AG04449 (cell line): ENCODE measurements at regions of chr11 and their contacts with region 1.

Region 1: DNA sequence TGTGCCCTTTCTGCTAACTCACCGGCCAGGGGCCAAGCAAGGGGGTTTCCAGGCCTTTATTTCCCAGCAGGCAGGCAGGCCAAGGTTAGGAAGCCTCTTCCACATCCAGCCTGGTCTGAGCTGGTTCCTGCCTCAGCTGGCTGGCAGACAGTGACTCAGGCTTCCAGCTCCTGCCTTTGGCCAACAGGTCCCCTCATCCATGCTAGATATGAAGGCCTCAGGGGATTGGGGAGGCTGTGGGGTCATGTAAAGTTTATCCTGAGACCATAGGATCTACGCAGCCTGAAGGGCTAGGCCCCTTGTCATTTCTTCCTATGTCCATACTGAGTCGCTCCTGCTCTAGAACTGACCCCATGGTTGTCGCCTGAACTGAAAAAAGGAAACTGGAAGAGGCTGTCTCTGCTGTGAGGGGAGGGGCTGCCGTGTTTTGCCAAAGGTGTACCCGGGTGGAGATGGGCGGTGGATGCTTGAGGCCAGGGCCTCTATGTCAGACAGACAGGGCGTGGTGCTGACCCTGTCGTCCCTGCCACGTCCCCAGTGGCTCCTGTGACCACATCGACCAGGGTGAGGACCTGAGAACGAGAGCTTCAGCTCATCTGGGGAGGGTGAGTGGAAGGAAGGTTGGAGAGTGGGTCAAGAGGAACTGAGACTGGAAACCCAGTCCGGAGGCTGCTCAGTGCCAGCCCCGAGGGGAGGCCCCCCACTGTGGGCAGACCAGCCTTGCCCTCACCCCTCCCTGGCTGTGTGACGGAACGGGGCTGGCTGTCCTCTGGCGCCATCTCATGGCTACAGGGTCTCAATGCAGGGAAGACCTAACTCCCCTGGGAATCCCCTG is 17.0 kb downstream of the P2RY6 start:
- DNase-seq: no peak
- H3K4me3 ChIP-seq: no peak overlapping the region
- CTCF ChIP-seq: peak; percentile 97

Region 2: DNA sequence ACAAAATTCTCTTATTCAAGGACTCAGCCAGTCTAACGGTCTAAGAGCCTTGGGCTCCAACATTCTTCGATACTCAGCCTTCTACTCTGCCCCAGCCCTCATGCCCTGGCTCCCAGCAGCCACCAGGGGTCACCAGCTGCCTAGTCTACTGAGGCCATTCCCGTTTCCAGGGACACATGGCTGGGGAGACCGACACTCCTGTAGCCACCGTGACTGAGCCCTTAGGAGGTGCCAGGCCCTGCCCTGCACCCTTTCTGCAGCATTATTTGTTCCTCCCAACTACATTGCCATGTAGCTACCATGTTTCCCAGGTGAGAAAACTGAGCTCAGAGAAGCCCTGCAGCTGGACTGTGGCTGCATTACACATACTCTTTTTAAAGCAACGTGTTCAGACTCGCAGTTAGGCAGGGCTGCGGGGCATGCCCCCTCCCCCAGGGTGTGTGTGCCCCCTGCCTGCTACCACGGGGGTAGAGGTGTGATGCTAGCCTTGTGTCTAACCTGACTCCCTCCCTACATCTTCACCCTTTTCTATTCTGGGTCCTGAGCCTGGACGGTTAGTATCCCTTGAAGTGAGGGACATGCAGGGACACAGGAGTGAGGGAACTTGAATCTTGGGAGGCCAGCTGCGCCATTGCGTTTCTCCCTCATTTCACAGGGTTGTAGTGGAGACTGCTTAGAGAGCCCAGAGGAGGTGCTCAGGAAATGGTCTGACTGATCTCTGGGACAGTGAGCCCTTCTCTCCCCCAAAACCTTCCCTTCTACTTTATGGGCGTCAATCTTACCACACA is 457.4 kb before region 1 on chr11:
- CTCF ChIA-PET with region 1: interaction called, 26 read pairs
- POLR2A ChIA-PET with region 1: no interaction called
- DNase-seq: no peak
- H3K4me3 ChIP-seq: no peak overlapping the region
- CTCF ChIP-seq: peak; percentile 97

Region 3: DNA sequence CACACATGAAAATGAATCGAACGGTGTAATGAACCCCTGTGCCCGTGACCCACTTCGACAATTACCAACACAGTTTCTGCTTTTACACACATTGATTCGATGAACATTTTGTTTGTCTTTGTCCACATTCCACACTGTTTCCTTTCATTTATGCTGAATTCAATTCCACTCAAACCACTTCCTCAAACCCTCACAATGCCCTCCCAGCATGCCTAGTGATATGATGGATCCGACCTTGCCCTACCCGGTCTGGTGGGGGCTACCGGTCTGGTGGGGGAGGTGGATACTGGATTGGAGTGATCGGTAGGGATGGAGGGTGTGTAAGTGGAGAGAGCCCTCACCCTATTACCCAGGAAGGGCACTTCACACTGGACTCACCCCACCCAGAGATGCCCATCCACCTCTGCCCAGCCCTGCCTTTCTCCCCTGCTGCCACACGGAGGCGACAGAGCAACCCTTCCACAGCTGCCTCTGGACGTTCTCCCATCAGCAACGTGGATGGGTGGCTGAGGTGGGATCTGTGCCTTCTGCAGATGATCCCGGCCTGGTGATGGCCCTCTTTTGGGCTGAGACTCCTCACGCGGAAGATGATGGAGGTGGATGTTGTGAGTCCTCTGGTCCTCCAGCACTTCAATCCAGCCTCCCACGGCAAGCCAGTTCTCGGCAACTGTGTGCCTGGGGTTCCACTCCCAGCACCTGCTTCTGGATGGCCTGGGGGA is 104.0 kb before region 1 on chr11:
- CTCF ChIA-PET with region 1: interaction called, 179 read pairs
- POLR2A ChIA-PET with region 1: no interaction called
- DNase-seq: no peak
- H3K4me3 ChIP-seq: no peak overlapping the region
- CTCF ChIP-seq: peak; percentile 96

Region 4: GRCh38 chr11:73242251-73243079 is 46.6 kb before region 1 on chr11:
- CTCF ChIA-PET with region 1: interaction called, 71 read pairs
- POLR2A ChIA-PET with region 1: no interaction called
- DNase-seq: no peak
- H3K4me3 ChIP-seq: peak overlapping the region; percentile 13; the same call in 1 of the 2 replicates
- CTCF ChIP-seq: peak; percentile 94

Region 5: DNA sequence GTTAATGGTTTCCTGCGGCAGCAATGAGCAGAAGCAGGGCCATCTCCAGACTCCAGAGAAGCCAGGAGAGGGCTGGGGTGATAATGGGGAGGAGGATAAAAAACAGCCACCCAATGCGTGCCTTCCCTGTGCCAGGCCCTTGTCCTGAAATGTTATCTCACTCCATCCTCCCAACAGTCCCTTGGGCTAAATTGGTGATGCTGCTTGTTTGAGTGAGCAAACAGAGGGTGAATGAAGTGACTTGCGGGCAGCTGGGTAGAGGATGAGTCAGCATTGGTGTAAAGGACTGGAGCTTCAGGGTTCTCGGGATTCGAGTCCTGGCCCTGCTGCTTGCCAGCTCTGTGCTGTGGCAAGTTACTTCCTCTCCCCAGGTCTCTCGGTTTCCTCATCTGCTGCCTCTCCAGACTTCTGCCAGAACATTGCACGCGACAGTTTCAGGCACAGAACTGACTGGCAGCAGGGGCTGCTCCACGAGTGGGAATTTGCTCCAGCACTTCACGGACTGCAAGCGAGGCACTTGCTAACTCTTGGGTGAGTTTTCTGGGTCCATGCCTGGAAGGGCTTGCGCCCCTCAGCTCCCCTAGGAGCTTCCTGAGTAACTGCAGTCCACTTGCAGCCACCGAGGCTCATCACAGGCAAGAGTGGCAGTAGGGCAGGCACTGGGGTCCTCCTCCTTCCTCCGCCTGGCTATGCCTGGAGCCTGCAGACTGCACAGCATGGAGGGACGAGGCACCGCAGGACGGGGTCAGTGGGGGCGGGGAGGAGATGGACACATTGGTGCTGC is 17.0 kb before region 1 on chr11 and contains the start of gene P2RY6:
- CTCF ChIA-PET with region 1: interaction called, 48 read pairs
- POLR2A ChIA-PET with region 1: no interaction called
- DNase-seq: peak; percentile 16
- H3K4me3 ChIP-seq: no peak within 1 kb of the TSS
- CTCF ChIP-seq: no peak

Region 6: GRCh38 chr11:73406131-73406530 is 117.0 kb after region 1 on chr11:
- CTCF ChIA-PET with region 1: no interaction called
- POLR2A ChIA-PET with region 1: no interaction called
- DNase-seq: no peak
- H3K4me3 ChIP-seq: no peak overlapping the region
- CTCF ChIP-seq: no peak